ENCODE measurements at regions of chr5 and their contacts with region 1.

Region 1: GRCh38 chr5:149448831-149449714 is 70.0 kb upstream of the IL17B start:
- DNase-seq: peak; percentile 33
- ATAC-seq: peak; percentile 51
- H3K4me3 Mint-ChIP-seq: no peak overlapping the region
- H3K27ac Mint-ChIP-seq: no peak overlapping the region
- H3K4me1 Mint-ChIP-seq: peaks cover 38% of the 10 kb centered on the region
- H3K27me3 Mint-ChIP-seq: no peaks in the 10 kb centered on the region
- CTCF ChIP-seq: no peak; the same call in 1 of the 2 replicates

Region 2: GRCh38 chr5:149551200-149552037 is 102.3 kb after region 1 on chr5 and contains the start of gene CSNK1A1:
- CTCF ChIA-PET with region 1: interaction called, 12 read pairs
- POLR2A ChIA-PET with region 1: interaction called, 6 read pairs
- DNase-seq: peak; percentile 98
- ATAC-seq: peak; percentile 90
- H3K4me3 Mint-ChIP-seq: peak within 1 kb of the TSS; percentile 98
- H3K27ac Mint-ChIP-seq: peak within 1 kb of the TSS; percentile 99
- H3K4me1 Mint-ChIP-seq: peaks cover 33% of the 10 kb centered on the region
- H3K27me3 Mint-ChIP-seq: no peaks in the 10 kb centered on the region
- CTCF ChIP-seq: peak; percentile 47
- total RNA-seq, gene CSNK1A1: 265 to 276 TPM (median 269 TPM) in 3 replicates

Measured in WTC11 (cell line).